Activated CD4-positive, alpha-beta T cell treated with anti-CD3 and anti-CD28 coated beads, Interleukin-2, amount 10 ng/mL, durations not matched to agents 24 days and 14 days (primary cell): ENCODE measurements at regions of chr13 and their contacts with region 1.

Region 1: DNA sequence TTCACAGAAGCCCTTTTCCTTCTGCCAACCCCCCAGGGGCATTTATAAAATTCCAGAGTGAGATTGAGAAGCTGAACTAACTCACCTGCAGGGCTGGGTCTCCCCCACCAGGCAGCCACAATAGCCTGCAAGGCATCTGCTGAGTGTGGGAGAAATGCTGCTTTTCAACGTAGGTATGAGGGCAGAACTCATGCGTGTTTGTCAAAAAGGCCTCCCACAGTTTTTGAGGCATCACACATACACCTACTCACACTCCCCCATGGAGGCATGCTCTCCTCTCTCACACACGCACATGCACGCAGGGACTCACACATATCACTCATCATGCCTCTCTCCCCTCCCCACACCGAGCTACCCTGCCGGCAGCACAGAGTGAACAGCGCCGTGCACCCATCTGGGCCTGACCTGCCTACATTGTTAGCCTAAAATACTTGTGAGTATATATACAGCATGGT is 390.5 kb downstream of the FGF9 start:
- DNase-seq: peak; percentile 77
- H3K4me3 Mint-ChIP-seq: peak overlapping the region; percentile 74
- H3K27ac Mint-ChIP-seq: peak overlapping the region; percentile 86
- H3K4me1 Mint-ChIP-seq: peaks cover 54% of the 10 kb centered on the region
- H3K27me3 Mint-ChIP-seq: no peaks in the 10 kb centered on the region

Region 2: GRCh38 chr13:21603531-21604448 is 457.6 kb before region 1 on chr13 and contains the start of gene MICU2:
- intact Hi-C with region 1: loop called (anchors 10 kb)
- DNase-seq: peak; percentile 99
- H3K4me3 Mint-ChIP-seq: peak within 1 kb of the TSS; percentile 89
- H3K27ac Mint-ChIP-seq: peak within 1 kb of the TSS; percentile 89
- H3K4me1 Mint-ChIP-seq: peaks cover 25% of the 10 kb centered on the region
- H3K27me3 Mint-ChIP-seq: peaks cover 22% of the 10 kb centered on the region
- total RNA-seq, gene MICU2: 34.2 and 35.0 TPM in 2 replicates

Region 3: GRCh38 chr13:22027566-22027965 is 33.8 kb before region 1 on chr13:
- intact Hi-C with region 1: loop called (anchors 5 kb)
- DNase-seq: no peak
- H3K4me3 Mint-ChIP-seq: no peak overlapping the region
- H3K27ac Mint-ChIP-seq: no peak overlapping the region
- H3K4me1 Mint-ChIP-seq: no peaks in the 10 kb centered on the region
- H3K27me3 Mint-ChIP-seq: peaks cover 5% of the 10 kb centered on the region

Region 4: GRCh38 chr13:22049384-22049783 is 12.0 kb before region 1 on chr13:
- intact Hi-C with region 1: no loop called
- DNase-seq: no peak
- H3K4me3 Mint-ChIP-seq: no peak overlapping the region
- H3K27ac Mint-ChIP-seq: no peak overlapping the region
- H3K4me1 Mint-ChIP-seq: peaks cover 12% of the 10 kb centered on the region
- H3K27me3 Mint-ChIP-seq: no peaks in the 10 kb centered on the region

Region 5: DNA sequence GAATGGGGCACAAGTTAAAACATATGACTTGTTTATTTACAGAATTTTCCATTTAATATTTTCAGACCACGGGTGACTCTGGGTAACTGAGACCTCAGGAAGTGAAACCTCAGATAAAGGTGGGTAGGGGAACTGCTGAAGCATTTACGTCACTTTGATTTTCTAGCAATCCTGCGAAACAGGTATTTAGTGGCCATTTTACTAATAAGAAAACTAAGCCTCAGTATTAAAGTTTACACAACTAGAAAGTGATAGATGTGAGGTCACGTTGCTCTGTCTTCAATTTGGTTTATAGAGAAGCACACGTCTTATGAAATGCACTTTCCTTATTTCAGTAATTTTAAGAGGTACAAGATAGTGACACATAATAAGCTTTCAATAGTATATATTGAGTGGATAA is 12.3 kb after region 1 on chr13:
- intact Hi-C with region 1: loop called (anchors 1 kb)
- DNase-seq: no peak
- H3K4me3 Mint-ChIP-seq: peak overlapping the region; percentile 15
- H3K27ac Mint-ChIP-seq: peak overlapping the region; percentile 58
- H3K4me1 Mint-ChIP-seq: peaks cover 42% of the 10 kb centered on the region
- H3K27me3 Mint-ChIP-seq: no peaks in the 10 kb centered on the region

Region 6: GRCh38 chr13:22161871-22162270 is 100.5 kb after region 1 on chr13:
- intact Hi-C with region 1: loop called (anchors 5 kb)
- DNase-seq: no peak
- H3K4me3 Mint-ChIP-seq: no peak overlapping the region
- H3K27ac Mint-ChIP-seq: no peak overlapping the region
- H3K4me1 Mint-ChIP-seq: peaks cover 15% of the 10 kb centered on the region
- H3K27me3 Mint-ChIP-seq: peaks cover 1% of the 10 kb centered on the region

Region 7: DNA sequence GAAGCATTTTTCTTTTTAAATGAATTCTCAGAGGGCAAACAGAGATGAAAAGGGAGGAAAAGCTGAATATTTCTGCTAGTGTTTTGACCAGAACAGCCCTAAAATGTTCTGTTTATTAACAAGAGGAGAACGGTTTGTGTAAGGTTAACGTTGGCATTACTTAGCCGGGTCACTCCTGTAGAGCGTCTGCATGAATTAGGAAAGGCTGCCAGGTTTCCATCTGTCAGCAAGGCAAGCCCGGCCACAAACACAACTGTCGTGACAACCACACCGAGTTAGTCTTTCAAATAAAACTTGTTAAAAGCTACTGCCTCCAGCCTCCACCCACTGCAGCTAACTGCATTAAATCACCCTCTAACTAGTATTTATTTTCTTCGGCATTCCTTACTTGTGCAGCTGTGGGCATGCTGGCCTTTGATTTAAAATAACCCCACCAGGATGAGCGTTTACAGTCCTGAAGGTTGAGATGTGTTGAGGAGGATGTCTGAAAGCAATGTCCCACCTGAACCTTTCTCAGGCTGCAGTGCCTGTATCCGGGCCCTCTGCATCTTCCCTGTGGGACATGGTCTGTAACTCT is 137.4 kb after region 1 on chr13:
- intact Hi-C with region 1: no loop called
- DNase-seq: no peak
- H3K4me3 Mint-ChIP-seq: no peak overlapping the region
- H3K27ac Mint-ChIP-seq: no peak overlapping the region
- H3K4me1 Mint-ChIP-seq: no peaks in the 10 kb centered on the region
- H3K27me3 Mint-ChIP-seq: no peaks in the 10 kb centered on the region